Activated T-helper 2 cell treated with anti-CD3 and anti-CD28 coated beads, Interferon-gamma antibody, Interleukin-2, Interleukin-4, amounts not matched to agents 10 μg/mL and 5 μg/mL and 100 μg/mL, durations not matched to agents 14 hours and 24 hours and 36 hours (primary cell): ENCODE measurements at regions of chr3 and their contacts with region 1.

Region 1: DNA sequence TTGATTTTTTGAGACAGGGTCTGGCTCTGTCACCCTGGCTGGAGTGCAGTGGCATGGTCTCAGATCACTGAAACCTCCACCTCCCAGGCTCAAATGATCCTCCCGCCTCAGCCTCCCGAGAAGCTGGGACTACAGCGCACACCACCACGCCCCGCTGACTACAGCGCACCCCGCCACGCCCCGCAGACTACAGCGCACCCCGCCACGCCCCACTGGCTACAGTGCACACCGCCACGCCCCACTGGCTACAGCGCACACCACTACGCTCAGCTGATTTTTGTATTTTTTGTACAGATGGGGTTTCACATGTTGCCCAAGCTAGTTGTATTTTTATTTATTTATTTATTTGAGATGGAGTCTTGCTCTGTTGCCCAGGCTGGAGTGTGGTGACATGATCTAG is 35.6 kb downstream of the SLC51A start:
- DNase-seq: no peak
- H3K4me3 Mint-ChIP-seq: no peak overlapping the region
- H3K27ac Mint-ChIP-seq: no peak overlapping the region
- H3K4me1 Mint-ChIP-seq: peaks cover 7% of the 10 kb centered on the region
- H3K27me3 Mint-ChIP-seq: no peaks in the 10 kb centered on the region

Region 2: DNA sequence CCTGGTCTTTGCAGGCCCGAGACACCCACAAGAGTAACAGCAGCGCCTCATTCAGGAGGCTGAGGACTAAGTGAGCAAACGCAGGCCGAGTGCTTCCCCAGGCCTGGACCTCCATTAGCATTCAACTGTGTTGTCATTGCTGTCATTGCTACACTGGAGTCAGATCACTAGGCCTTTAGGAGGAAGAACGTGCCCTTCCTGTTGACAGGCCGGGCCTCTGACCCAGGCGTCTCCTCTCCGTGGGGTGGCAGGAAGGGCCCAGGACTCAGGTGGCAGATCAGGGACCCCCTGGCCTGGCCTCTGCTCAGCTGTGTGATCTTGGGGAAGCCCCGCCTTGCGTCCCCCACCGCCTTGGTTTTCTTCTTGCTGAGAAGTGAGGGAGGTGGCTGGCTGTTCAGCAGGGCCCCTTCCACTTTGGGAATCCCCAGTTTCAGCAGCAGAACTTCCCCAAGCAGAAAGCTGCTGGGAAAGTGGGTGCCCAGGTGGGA is 59.8 kb before region 1 on chr3:
- intact Hi-C with region 1: no loop called
- DNase-seq: no peak
- H3K4me3 Mint-ChIP-seq: no peak overlapping the region
- H3K27ac Mint-ChIP-seq: peak overlapping the region; percentile 94
- H3K4me1 Mint-ChIP-seq: peaks cover 27% of the 10 kb centered on the region
- H3K27me3 Mint-ChIP-seq: no peaks in the 10 kb centered on the region

Region 3: GRCh38 chr3:196287440-196288148 is 35.7 kb after region 1 on chr3 and contains the start of gene PCYT1A:
- intact Hi-C with region 1: loop called (anchors 1 kb)
- DNase-seq: peak; percentile 71
- H3K4me3 Mint-ChIP-seq: peak within 1 kb of the TSS; percentile 96
- H3K27ac Mint-ChIP-seq: peak within 1 kb of the TSS; percentile 91
- H3K4me1 Mint-ChIP-seq: peaks cover 27% of the 10 kb centered on the region
- H3K27me3 Mint-ChIP-seq: no peaks in the 10 kb centered on the region
- total RNA-seq, gene PCYT1A: 49.2 and 53.7 TPM in 2 replicates

Region 4: GRCh38 chr3:196317687-196318467 is 66.0 kb after region 1 on chr3 and contains the start of gene DYNLT2B:
- intact Hi-C with region 1: loop called (anchors 1 kb)
- DNase-seq: peak; percentile 88
- H3K4me3 Mint-ChIP-seq: peak within 1 kb of the TSS; percentile 94
- H3K27ac Mint-ChIP-seq: peak within 1 kb of the TSS; percentile 97
- H3K4me1 Mint-ChIP-seq: peaks cover 10% of the 10 kb centered on the region
- H3K27me3 Mint-ChIP-seq: no peaks in the 10 kb centered on the region
- total RNA-seq, gene DYNLT2B: 10.9 and 12.3 TPM in 2 replicates

Region 5: GRCh38 chr3:196406811-196407470 is 155.0 kb after region 1 on chr3:
- intact Hi-C with region 1: no loop called
- DNase-seq: no peak
- H3K4me3 Mint-ChIP-seq: no peak overlapping the region
- H3K27ac Mint-ChIP-seq: no peak overlapping the region
- H3K4me1 Mint-ChIP-seq: peaks cover 2% of the 10 kb centered on the region
- H3K27me3 Mint-ChIP-seq: no peaks in the 10 kb centered on the region

Region 6: DNA sequence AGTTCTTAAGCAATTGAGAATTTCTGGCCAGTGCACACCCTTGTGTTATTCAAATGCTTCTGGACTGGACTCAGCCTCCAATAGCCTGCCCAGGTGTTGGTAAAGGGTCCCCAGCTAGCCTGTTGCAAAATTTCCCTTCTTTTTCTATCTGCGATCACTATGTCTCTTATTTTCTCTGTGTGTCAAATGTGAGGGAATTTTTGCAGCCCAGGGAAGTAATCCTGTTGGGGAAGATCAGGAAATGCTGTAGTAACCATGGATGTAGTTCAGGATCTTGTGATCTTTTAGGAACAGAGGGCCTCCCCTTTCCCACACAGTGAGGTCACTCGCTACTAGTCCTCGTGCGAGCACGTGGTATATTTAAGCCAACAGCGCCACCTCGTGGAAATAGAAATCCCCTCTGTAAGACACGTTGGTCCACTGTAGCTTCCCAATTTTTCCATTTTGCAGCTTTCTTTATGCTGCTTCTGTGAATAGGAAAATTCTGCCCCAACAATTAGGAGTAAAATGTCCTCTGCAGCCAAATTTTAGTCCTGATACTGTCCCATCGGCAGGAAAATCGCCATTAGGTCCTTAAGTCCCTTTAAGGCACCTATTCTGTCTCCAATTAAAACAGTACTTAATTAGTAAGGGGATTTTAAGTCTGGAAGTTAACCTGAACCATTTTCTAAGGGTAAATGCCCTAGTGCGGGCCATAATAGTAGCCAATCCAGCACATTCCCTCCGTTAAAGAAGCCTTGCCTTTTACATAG is 267.2 kb after region 1 on chr3:
- intact Hi-C with region 1: loop called (anchors 2 kb)
- DNase-seq: peak; percentile 40
- H3K4me3 Mint-ChIP-seq: no peak overlapping the region
- H3K27ac Mint-ChIP-seq: no peak overlapping the region
- H3K4me1 Mint-ChIP-seq: no peaks in the 10 kb centered on the region
- H3K27me3 Mint-ChIP-seq: no peaks in the 10 kb centered on the region